Lower leg skin (tissue), 4 donors: ENCODE measurements at regions of chr7 and their contacts with region 1.

Region 1: GRCh38 chr7:55255496-55256435 is 109.4 kb upstream of the LANCL2 start:
- DNase-seq: peak; percentile 82 to 97
- H3K4me3 ChIP-seq: peak overlapping the region; percentile 29
- CTCF ChIP-seq: peak in 1 of 3 donors; percentile 81
- POLR2A ChIP-seq: no peak

Region 2: GRCh38 chr7:54773472-54774399 is 482.0 kb before region 1 on chr7:
- intact Hi-C with region 1: loop called (anchors 5 kb)
- DNase-seq: peak; percentile 79 to 96
- H3K4me3 ChIP-seq: no peak overlapping the region
- CTCF ChIP-seq: peak in 1 of 3 donors; percentile 44
- POLR2A ChIP-seq: no peak

Region 3: DNA sequence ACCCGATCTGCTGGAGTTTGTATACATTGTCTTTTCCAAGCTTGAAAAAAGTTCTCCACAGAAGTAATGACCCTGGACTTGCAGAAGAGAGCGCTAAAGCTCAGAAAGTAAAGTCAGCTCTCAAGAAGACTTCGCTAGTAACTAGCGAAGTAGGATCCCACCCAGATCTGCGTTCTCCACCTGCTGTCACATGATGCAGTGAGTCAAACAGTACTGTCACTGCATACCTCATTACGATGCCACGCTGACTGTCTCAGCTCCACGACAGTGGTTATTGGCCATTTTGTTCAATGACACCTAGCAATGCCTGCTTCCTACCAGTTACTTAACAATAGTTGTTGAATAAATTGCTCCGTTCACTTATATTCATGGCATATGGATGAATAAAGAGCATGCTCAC is 467.1 kb before region 1 on chr7:
- intact Hi-C with region 1: loop called (anchors 5 kb)
- DNase-seq: peak in 1 of 2 donors; percentile 45
- H3K4me3 ChIP-seq: no peak overlapping the region
- CTCF ChIP-seq: peak in 1 of 3 donors; percentile 28
- POLR2A ChIP-seq: no peak